ENCODE measurements at regions of chr14 and their contacts with region 1.

Region 1: DNA sequence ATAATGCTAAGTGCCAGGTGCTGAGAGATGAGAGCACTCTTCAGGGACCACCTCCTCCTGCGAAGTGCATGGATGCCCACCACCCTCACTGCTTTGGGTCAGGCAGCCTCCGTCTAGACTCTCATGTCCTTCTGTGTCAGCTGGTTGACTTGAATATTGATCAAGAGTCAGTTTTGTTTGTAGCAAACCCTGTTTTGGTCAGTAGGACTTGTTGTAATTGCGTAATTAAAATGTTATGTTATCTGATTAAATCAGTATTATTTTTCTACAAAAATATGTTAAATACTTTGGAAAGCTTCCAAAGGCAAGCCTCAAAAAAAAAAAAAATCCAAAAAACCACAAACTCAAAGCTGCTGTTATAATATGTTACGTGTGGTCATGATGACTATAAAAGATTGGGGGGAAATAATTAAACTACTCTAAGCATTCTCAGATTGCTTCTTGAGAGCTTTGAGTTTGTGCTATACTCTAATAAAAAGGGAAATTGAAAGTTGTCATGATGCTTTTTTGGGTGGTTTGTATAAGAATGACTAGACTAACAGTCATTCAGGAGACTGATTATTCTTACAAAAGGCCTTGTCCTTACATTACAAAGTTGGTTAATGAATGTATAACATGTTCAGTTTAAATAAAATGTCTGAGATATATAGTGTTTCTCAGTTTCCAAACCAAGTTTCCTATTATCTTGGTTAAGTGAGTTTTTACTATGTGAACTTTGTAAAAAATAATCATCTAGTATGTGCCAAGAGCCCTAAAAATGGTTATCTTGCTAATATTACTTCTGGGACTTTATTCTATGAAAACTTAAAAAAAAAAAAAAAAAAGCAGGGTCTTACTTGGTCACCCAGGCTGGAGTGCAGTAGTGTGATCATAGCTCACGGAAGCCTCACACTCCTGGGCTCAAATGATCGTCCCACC is 459.9 kb upstream of the RGS6 start:
- DNase-seq: no peak
- H3K4me3 Mint-ChIP-seq: no peak overlapping the region
- H3K27ac Mint-ChIP-seq: peak overlapping the region; percentile 70
- H3K4me1 Mint-ChIP-seq: peaks cover 64% of the 10 kb centered on the region
- H3K27me3 Mint-ChIP-seq: no peaks in the 10 kb centered on the region

Region 2: GRCh38 chr14:71438684-71439083 is 33.6 kb before region 1 on chr14:
- intact Hi-C with region 1: no loop called
- DNase-seq: no peak
- H3K4me3 Mint-ChIP-seq: no peak overlapping the region
- H3K27ac Mint-ChIP-seq: no peak overlapping the region
- H3K4me1 Mint-ChIP-seq: peaks cover 13% of the 10 kb centered on the region
- H3K27me3 Mint-ChIP-seq: no peaks in the 10 kb centered on the region

Region 3: GRCh38 chr14:71488703-71489191 is 16.4 kb after region 1 on chr14:
- intact Hi-C with region 1: no loop called
- DNase-seq: no peak
- H3K4me3 Mint-ChIP-seq: no peak overlapping the region
- H3K27ac Mint-ChIP-seq: no peak overlapping the region
- H3K4me1 Mint-ChIP-seq: peaks cover 29% of the 10 kb centered on the region
- H3K27me3 Mint-ChIP-seq: no peaks in the 10 kb centered on the region

Region 4: GRCh38 chr14:71523630-71524319 is 51.5 kb after region 1 on chr14:
- intact Hi-C with region 1: loop called (anchors 5 kb)
- DNase-seq: no peak
- H3K4me3 Mint-ChIP-seq: no peak overlapping the region
- H3K27ac Mint-ChIP-seq: peak overlapping the region; percentile 63
- H3K4me1 Mint-ChIP-seq: peaks cover 28% of the 10 kb centered on the region
- H3K27me3 Mint-ChIP-seq: no peaks in the 10 kb centered on the region

Measured in activated T-helper 2 cell treated with anti-CD3 and anti-CD28 coated beads, Interferon-gamma antibody, Interleukin-2, Interleukin-4, amounts not matched to agents 10 μg/mL and 5 μg/mL and 100 μg/mL, durations not matched to agents 14 hours and 24 hours and 36 hours (primary cell).